ENCODE measurements at regions of chr1 and their contacts with region 1.

Region 1: GRCh38 chr1:37840711-37841110 is 18.7 kb downstream of the MTF1 start:
- DNase-seq: no peak
- CTCF ChIP-seq: no peak

Region 2: GRCh38 chr1:37828410-37829074 is 12.2 kb before region 1 on chr1:
- CTCF ChIA-PET with region 1: interaction called, 14 read pairs
- POLR2A ChIA-PET with region 1: no interaction called
- DNase-seq: no peak
- CTCF ChIP-seq: no peak